ENCODE measurements at regions of chr17 and their contacts with region 1.

Region 1: GRCh38 chr17:63842540-63843386 is at the start of gene SMARCD2:
- DNase-seq: peak in 1 of 2 donors; percentile 99
- H3K4me3 ChIP-seq: peak within 1 kb of the TSS; percentile 96 to 100
- H3K27ac ChIP-seq: peak within 1 kb of the TSS; percentile 97
- H3K4me1 ChIP-seq: peaks cover 47% of the 10 kb centered on the region
- H3K27me3 ChIP-seq: no peaks in the 10 kb centered on the region
- CTCF ChIP-seq: peak in 1 of 3 experiments; percentile 68
- POLR2A ChIP-seq: peak; percentile 47 to 97
- total RNA-seq, gene SMARCD2: 146 TPM

Region 2: DNA sequence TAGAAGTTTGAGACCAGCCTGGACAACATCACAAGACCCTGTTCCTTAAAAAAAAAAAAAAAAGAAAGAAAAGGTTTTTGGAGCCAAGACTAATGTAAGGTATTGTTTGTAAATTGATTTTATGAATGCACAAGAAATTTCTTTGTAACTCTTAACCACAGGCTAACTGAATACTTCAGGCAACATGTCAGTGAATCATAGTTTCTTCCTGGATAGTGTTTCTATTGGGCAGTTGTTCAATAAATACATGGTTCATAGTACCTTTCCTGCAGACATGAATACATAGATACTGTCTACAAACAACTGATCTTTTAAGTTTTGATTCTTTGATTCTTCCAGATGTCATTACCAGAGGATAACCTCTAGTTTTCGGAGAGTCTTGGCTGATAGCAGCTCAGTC is 57.2 kb before region 1 on chr17:
- intact Hi-C with region 1: no loop called
- DNase-seq: no peak
- H3K4me3 ChIP-seq: no peak overlapping the region
- H3K27ac ChIP-seq: no peak overlapping the region
- H3K4me1 ChIP-seq: peaks cover 9% of the 10 kb centered on the region
- H3K27me3 ChIP-seq: no peaks in the 10 kb centered on the region
- CTCF ChIP-seq: no peak
- POLR2A ChIP-seq: no peak

Region 3: DNA sequence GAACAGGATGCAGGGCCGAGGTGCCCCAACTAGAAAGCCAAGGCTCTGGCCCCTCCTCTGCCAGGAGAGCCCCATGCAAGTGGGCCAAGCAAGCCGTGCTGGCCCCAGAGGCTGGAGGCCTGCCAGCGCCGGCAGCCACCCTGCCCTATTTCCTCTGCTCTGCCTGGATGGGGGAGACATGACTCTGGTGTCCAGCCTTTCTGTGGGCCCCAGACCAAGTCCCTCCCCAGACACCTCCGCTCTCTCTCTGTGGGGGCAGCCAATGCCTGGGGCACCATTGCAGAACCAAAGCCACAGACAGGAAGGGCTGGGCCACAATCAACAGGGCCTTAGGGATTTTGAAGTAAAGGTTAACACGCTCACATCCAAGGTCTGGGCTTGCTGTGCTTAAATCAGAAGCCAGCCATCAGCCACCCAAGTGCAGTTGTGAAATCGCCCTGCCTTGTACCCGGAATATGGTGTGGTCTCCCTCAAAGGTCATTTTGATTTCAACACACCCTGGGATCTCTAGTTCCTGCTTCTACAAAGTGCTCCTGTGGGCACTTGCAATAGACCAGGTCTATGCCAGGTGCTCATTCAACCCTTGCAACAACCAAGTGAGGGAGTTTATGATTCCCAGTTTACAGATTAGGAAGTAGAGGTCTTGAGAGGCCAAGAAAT is 483.8 kb after region 1 on chr17:
- intact Hi-C with region 1: no loop called
- DNase-seq: peak in 1 of 2 donors; percentile 96
- H3K4me3 ChIP-seq: no peak overlapping the region
- H3K27ac ChIP-seq: peak overlapping the region; percentile 68
- H3K4me1 ChIP-seq: peaks cover 42% of the 10 kb centered on the region
- H3K27me3 ChIP-seq: no peaks in the 10 kb centered on the region
- CTCF ChIP-seq: no peak
- POLR2A ChIP-seq: no peak

Region 4: DNA sequence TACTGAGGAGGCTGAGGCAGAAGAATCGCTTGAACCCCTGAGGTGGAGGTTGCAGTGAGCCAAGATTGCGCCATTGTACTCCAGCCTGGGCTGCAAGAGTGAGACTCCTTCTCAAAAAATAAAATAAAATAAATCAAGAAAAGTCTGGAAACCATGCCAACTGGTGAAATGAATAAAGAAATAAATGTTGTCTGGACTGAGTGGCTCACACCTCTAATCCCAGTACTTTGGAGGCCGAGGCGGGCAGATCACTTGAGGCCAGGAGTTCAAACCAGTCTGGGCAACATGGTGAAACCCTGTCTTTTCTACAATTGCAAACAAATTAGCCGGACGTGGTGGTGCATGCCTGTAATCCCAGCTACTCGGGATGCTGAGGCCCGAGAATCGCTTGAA is 1077.3 kb after region 1 on chr17:
- intact Hi-C with region 1: loop called (anchors 10 kb)
- DNase-seq: no peak
- H3K4me3 ChIP-seq: peak overlapping the region; percentile 60 to 82
- H3K27ac ChIP-seq: peak overlapping the region; percentile 90
- H3K4me1 ChIP-seq: peaks cover 8% of the 10 kb centered on the region
- H3K27me3 ChIP-seq: no peaks in the 10 kb centered on the region
- CTCF ChIP-seq: no peak
- POLR2A ChIP-seq: no peak

Measured in vagina (tissue), 2 donors.